HEK293 (cell line): ENCODE measurements at regions of chr7 and their contacts with region 1.

Region 1: GRCh38 chr7:116671681-116672595 is at the start of gene MET:
- H3K4me3 ChIP-seq: peak within 1 kb of the TSS; percentile 71
- H3K27ac ChIP-seq: peak within 1 kb of the TSS; percentile 85
- H3K4me1 ChIP-seq: peaks cover 18% of the 10 kb centered on the region; the same call in 1 of the 2 replicates
- CTCF ChIP-seq: peak; percentile 97

Region 2: DNA sequence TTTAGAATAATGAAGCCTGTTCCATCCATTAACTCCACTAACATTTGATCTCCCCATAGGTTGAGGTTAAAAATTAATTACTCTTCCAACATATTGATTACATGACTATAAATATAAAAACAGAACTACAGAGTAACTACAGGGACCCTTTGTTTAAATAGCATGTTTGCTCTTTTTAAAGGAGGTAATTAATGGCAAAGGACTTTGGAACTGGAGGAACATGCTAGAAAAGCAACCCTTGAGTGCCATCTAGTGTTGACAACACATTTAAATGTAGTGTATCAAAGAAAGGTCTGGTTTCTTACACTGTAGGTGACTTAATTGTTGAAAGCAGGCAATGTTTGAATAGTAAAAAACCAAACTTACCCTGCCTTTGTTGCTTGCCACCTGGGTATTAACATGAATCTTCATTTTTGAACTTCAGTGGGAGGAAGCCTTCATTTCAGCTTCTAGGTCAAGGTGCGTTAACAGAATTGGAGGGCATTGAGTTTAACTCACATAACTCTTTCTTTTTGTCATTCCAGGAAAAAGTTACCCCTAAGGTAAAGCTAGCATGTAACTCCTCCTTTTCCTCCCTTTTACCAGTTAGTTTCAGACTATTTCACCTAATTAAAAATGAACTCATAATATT is 137.8 kb after region 1 on chr7:
- CTCF ChIA-PET with region 1: interaction called, 10 read pairs
- POLR2A ChIA-PET with region 1: no interaction called
- H3K4me3 ChIP-seq: no peak overlapping the region
- H3K27ac ChIP-seq: peak overlapping the region; percentile 39
- H3K4me1 ChIP-seq: peaks cover 29% of the 10 kb centered on the region
- CTCF ChIP-seq: peak; percentile 55; the same call in 1 of the 2 replicates

Region 3: DNA sequence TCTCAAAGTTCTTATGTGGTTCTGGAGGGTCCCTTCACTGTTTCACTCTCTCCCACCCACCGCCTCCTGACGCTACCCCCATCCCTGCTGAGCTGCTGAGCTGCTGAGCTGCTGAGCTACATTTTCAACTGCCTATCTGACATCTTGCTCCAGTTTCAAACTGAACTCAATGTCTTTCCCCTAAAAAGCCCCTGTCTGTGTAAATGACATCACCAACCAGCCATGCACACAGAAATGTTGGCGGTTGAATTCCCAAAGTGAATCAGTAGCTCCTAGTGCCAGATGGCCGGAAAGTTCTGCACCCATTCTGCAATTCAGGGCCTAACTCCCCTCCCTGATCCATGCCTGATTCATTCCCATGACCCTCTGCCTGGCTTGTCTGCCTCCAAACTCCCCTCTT is 579.7 kb after region 1 on chr7:
- CTCF ChIA-PET with region 1: no interaction called
- POLR2A ChIA-PET with region 1: no interaction called
- H3K4me3 ChIP-seq: no peak overlapping the region
- H3K27ac ChIP-seq: no peak overlapping the region
- H3K4me1 ChIP-seq: no peaks in the 10 kb centered on the region
- CTCF ChIP-seq: no peak